ENCODE measurements at regions of chr11 and their contacts with region 1.

Region 1: GRCh38 chr11:133956650-133957633 is at the start of gene IGSF9B:
- DNase-seq: peak; percentile 79 to 97 (median 92)

Region 2: DNA sequence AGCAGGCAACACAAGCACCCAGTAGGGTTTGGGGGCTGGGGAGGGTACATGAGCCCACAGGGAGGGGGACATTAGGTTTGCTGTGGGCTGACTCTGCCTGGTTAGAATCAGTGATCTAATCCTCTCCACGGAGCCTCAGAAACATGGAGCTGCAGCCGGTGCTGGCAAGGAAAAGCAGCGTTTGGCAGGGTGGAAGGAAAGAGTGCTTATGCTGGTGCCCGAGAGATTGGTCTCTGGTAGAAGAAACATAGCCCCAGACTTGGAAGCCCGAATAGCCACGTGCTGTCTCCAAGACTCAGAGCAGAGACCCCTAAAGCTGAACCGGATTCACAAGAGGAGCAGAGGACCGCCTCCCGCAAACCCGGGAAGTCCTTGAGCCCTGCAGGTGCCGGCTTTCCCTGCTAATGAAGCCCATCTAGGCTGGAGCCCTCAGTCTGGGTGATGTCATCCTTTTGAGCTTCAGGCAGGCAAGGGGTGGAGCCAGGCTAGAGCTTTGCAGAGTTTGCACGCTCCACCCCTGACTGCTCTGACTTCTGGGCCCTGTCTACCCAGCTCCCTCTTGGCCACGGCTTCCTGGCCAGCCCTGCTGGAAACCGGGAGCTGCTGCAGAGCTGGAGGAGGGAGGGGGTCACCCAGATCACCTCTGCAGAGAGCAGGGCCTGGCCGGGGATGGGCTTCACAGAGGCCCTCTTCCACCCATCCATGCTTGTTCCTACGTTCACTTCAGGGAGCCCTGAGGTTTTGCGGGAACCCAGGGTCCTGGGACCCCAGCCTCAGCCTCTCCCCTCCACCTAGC is 77.0 kb after region 1 on chr11:
- intact Hi-C with region 1: loop called (anchors 5 kb)
- DNase-seq: peak; percentile 57 to 96 (median 84)